GM12878 (cell line): ENCODE measurements at regions of chr5 and their contacts with region 1.

Region 1: DNA sequence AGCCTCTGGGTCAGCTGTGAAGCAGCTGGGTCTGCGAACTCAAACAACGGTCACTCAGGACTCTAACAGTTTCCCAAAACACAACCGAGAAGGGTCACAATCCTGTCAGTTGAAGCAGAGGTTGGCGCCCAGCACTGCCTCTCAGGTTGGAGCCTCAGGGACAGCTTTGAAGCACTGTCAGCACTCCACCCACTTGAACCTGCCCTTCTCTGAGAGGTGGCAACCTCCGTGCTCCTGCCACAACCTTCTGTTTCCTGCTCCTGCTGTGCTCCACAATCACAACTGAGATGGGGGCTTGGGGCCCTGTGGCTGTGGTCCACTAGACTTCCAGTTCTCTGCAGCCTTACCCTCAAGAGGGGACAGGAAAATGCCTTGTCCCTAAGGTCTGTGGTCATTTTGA is 21.7 kb upstream of the LCP2 start:
- DNase-seq: no peak
- ATAC-seq: no peak
- H3K4me3 ChIP-seq: no peak overlapping the region
- H3K27ac ChIP-seq: no peak overlapping the region
- H3K4me1 ChIP-seq: no peaks in the 10 kb centered on the region
- H3K27me3 ChIP-seq: no peaks in the 10 kb centered on the region; a peak in 1 of 4 replicates
- CTCF ChIP-seq: no peak
- EP300 ChIP-seq: no peak
- POLR2A ChIP-seq: no peak
- RAD21 ChIP-seq: no peak

Region 2: DNA sequence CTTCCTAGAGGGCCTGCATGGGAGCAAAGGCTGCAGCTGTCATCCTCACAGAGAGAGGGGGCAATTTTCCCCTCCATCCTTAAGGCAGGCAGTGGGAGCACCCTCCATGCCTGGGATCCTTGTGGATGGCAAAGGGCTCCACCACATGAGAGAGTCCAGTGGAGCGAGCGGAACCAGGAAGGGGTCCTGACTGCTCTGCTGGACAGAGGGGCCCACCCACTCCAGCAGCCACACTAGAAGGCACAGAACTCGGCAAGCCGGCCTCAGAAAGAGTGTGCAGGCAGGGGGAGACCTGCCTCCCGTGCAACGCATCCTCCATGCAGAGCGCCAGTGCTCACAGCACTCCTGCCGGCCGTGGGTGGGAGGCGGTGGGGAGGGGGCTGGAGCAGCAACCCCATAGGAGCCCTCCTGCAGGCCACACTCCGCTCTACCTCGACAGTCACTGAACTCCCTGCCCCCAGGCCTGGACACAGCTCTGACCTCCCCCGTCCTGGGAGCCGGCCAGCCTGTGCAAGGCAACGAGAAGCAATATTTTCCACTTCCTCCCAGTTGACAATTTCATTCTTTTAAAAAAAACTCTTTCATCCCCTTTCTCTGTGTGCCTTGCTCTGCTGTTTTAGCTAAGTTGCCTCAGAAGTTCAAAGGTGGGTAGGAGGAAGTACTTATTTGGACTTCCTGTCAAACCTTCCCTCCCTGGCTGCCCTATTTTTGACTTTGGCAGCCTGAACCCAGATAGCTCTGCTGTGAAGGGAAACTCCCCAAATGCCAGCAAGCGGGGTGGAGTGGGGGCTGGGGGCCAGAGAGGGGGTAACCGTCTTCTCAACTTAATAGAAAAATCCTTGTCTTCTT is 16.4 kb before region 1 on chr5:
- CTCF ChIA-PET with region 1: interaction called, 9 read pairs
- POLR2A ChIA-PET with region 1: interaction called, 16 read pairs
- RAD21 ChIA-PET with region 1: interaction called, 96 read pairs
- SMC1A ChIA-PET with region 1: interaction called, 31 read pairs
- in situ Hi-C with region 1: no loop called
- intact Hi-C with region 1: no loop called
- DNase-seq: peak; percentile 68
- ATAC-seq: peak; percentile 89
- H3K4me3 ChIP-seq: no peak overlapping the region
- H3K27ac ChIP-seq: peak overlapping the region; percentile 24; the same call in 1 of the 2 replicates
- H3K4me1 ChIP-seq: peaks cover 34% of the 10 kb centered on the region
- H3K27me3 ChIP-seq: no peaks in the 10 kb centered on the region
- CTCF ChIP-seq: no peak
- EP300 ChIP-seq: no peak
- POLR2A ChIP-seq: no peak
- RAD21 ChIP-seq: no peak

Region 3: DNA sequence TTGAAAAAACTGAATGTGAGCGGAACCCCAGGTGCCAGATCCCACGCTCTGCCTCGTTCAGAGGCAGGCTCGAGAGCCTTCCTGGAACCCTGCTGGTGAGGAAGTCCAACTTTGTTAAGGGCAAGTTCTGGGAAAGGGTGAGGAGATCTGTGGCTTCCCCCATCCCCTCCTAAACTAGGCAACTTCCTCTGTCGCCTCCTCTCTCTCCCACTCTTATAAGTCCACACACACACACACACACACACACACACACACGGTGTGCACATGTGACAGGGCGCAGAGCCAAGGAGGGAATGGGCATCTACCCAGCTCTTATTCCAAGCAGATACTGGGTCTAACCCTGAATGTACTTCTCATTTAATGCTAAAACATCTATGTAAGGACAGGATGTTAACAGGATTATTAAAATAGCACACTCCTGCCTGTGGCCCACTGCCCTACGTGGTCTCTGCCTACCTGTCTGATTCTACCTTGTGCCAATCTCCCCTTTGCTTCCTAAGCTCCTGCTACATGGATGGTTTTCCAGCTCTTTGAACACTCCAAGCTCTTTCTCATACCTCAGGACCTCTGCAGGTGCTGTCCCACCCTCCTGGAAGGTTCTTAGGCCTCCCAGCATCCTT is 1759.5 kb after region 1 on chr5:
- CTCF ChIA-PET with region 1: no interaction called
- POLR2A ChIA-PET with region 1: no interaction called
- RAD21 ChIA-PET with region 1: no interaction called
- SMC1A ChIA-PET with region 1: no interaction called
- in situ Hi-C with region 1: no loop called
- intact Hi-C with region 1: no loop called
- DNase-seq: no peak
- ATAC-seq: no peak; the same call in 2 of the 3 replicates
- H3K4me3 ChIP-seq: no peak overlapping the region
- H3K27ac ChIP-seq: no peak overlapping the region
- H3K4me1 ChIP-seq: no peaks in the 10 kb centered on the region
- H3K27me3 ChIP-seq: no peaks in the 10 kb centered on the region
- CTCF ChIP-seq: no peak
- EP300 ChIP-seq: no peak
- POLR2A ChIP-seq: no peak
- RAD21 ChIP-seq: no peak